ENCODE measurements at regions of chr9 and their contacts with region 1.

Region 1: DNA sequence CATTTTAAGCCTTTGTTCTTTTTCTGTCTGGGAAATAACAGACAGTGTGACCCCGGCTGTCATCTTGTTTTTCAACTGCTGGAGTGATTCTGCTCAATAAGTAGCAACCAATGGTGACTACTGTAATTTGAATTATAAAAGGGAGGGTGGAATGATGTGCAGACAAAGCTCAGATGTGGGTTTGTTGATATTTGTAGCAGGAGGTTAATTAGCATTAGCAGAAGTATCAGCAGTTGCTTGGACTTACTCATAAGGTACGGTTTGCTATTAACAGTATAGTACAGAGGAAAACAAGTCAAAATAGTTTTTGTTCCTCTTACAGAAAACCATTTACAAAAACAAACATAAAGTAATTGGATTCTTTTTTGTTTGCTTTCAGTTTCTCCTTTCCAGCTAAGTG is 140.4 kb downstream of the TUSC1 start:
- DNase-seq: no peak
- ATAC-seq: peak; percentile 48
- H3K4me3 ChIP-seq: no peak overlapping the region
- H3K27ac ChIP-seq: no peak overlapping the region
- H3K4me1 ChIP-seq: no peaks in the 10 kb centered on the region
- H3K27me3 ChIP-seq: no peaks in the 10 kb centered on the region
- CTCF ChIP-seq: no peak
- EP300 ChIP-seq: no peak
- POLR2A ChIP-seq: no peak
- RAD21 ChIP-seq: no peak

Region 2: DNA sequence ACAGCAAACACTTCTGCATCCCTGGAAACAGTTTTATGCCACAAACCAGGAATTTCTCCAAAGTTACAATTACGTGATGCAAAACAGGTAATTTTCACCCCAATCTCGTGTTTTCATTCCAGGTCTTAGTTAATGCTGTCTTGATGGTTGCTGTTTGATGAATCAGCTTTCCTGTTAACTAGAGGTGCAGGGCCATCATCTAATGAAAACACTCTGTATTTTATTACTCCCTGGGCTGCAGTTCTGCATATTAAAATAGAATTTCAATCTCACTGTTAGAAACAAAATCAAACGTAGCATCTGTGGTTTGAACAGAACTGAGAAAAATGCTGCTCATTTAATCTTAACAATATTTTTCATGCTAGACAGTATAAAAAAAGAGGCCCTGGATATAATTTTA is 11.0 kb after region 1 on chr9:
- CTCF ChIA-PET with region 1: interaction called, 4 read pairs
- POLR2A ChIA-PET with region 1: interaction called, 10 read pairs
- RAD21 ChIA-PET with region 1: interaction called, 5 read pairs
- SMC1A ChIA-PET with region 1: interaction called, 11 read pairs
- in situ Hi-C with region 1: no loop called
- intact Hi-C with region 1: no loop called
- DNase-seq: no peak
- ATAC-seq: no peak
- H3K4me3 ChIP-seq: no peak overlapping the region
- H3K27ac ChIP-seq: no peak overlapping the region
- H3K4me1 ChIP-seq: no peaks in the 10 kb centered on the region
- H3K27me3 ChIP-seq: no peaks in the 10 kb centered on the region
- CTCF ChIP-seq: no peak
- EP300 ChIP-seq: no peak
- POLR2A ChIP-seq: no peak
- RAD21 ChIP-seq: no peak

Measured in GM12878 (cell line).